Heart left ventricle (tissue), 16 donors: ENCODE measurements at regions of chr19 and their contacts with region 1.

Region 1: GRCh38 chr19:39341719-39342604 is at the start of gene SAMD4B:
- DNase-seq: peak; percentile 99 to 100 (median 99)
- ATAC-seq: peak; percentile 96 to 97 (median 97)
- H3K4me3 ChIP-seq: peak within 1 kb of the TSS; percentile 71 to 96 (median 86)
- H3K27ac ChIP-seq: peak within 1 kb of the TSS in 11 of 12 donors; percentile 80 to 93 (median 90)
- H3K4me1 ChIP-seq: peaks cover 0 to 58% (median 31%) of the 10 kb centered on the region in 12 donors
- H3K27me3 ChIP-seq: no peaks in the 10 kb centered on the region
- CTCF ChIP-seq: peak; percentile 75 to 97 (median 88)
- POLR2A ChIP-seq: peak; percentile 25 to 90
- total RNA-seq, gene SAMD4B: 34.9 to 101 (median 52.3) TPM

Region 2: GRCh38 chr19:39390755-39391592 is 49.0 kb after region 1 on chr19 and contains the starts of genes MED29 and PAF1:
- intact Hi-C with region 1: loop called in 4 of 10 experiments (anchors 1 to 10 kb)
- DNase-seq: peak; percentile 97 to 99 (median 98)
- ATAC-seq: peak; percentile 95 to 99 (median 96)
- H3K4me3 ChIP-seq: peak within 1 kb of the TSS; percentile 74 to 99 (median 94)
- H3K27ac ChIP-seq: peak within 1 kb of the TSS; percentile 94 to 100 (median 98)
- H3K4me1 ChIP-seq: peaks cover 3 to 25% (median 19%) of the 10 kb centered on the region in 12 donors
- H3K27me3 ChIP-seq: no peaks in the 10 kb centered on the region
- CTCF ChIP-seq: peak in 1 of 12 donors; percentile 26
- POLR2A ChIP-seq: peak; percentile 49 to 89
- total RNA-seq, gene MED29: 26.3 to 53.0 (median 34.1) TPM
- total RNA-seq, gene PAF1: 32.8 to 75.7 (median 40.7) TPM